Mammary epithelial cell (primary cell): ENCODE measurements at regions of chr17 and their contacts with region 1.

Region 1: GRCh38 chr17:71472809-71473789 is 647.7 kb upstream of the SOX9 start:
- DNase-seq: peak; percentile 63
- H3K4me3 ChIP-seq: no peak overlapping the region
- H3K27ac ChIP-seq: no peak overlapping the region
- H3K4me1 ChIP-seq: peaks cover 12% of the 10 kb centered on the region
- H3K27me3 ChIP-seq: no peaks in the 10 kb centered on the region
- CTCF ChIP-seq: peak; percentile 67 to 81

Region 2: DNA sequence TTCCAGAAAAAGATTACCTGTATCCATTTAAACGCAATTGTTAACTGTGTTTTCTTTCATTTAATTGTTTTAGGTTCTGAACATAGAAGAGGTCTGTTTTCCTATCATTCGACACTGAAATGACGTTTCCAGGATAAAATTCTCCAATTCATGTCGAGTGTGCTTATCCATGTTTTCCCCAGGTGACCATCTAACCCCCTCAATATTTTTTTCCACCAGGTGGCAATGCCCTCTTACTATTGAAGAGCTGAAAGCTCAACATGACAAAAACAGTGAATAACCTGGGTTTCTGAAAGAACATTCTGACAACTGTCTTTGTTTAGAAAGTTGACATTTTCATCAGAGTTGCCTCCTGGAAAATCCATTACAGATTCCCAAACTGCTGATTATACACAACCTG is 355.1 kb before region 1 on chr17:
- CTCF ChIA-PET with region 1: no interaction called
- dilution Hi-C with region 1: no loop called
- in situ Hi-C with region 1: no loop called
- intact Hi-C with region 1: loop called (anchors 2 kb)
- DNase-seq: peak; percentile 62
- H3K4me3 ChIP-seq: no peak overlapping the region
- H3K27ac ChIP-seq: peak overlapping the region; percentile 15
- H3K4me1 ChIP-seq: peaks cover 11% of the 10 kb centered on the region
- H3K27me3 ChIP-seq: no peaks in the 10 kb centered on the region
- CTCF ChIP-seq: peak; percentile 68 to 73

Region 3: DNA sequence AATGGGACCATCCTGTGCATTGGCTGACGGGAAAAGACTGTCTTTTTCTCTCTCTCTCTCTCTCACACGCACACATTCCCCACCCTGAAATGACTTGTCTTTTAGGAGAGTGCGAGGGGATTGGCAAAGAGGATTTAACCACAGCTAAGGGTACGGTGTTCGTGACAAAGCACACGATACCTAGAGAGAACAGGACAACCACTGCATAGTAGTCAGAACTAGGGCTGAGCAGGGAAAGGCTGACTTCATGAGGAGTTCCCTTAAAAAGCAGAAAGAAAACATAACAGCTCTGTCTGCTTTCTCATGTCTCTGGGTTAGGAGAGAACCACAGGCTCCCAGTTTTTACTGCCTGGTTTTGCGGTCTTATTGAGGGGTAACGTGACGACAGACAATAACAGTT is 95.1 kb before region 1 on chr17:
- CTCF ChIA-PET with region 1: no interaction called
- dilution Hi-C with region 1: no loop called
- in situ Hi-C with region 1: no loop called
- intact Hi-C with region 1: no loop called
- DNase-seq: no peak
- H3K4me3 ChIP-seq: no peak overlapping the region
- H3K27ac ChIP-seq: no peak overlapping the region
- H3K4me1 ChIP-seq: no peaks in the 10 kb centered on the region
- H3K27me3 ChIP-seq: no peaks in the 10 kb centered on the region
- CTCF ChIP-seq: no peak

Region 4: GRCh38 chr17:71412803-71413202 is 60.3 kb before region 1 on chr17:
- CTCF ChIA-PET with region 1: interaction called, 3 read pairs
- dilution Hi-C with region 1: no loop called
- in situ Hi-C with region 1: no loop called
- intact Hi-C with region 1: loop called (anchors 5 kb)
- DNase-seq: peak; percentile 98
- H3K4me3 ChIP-seq: no peak overlapping the region
- H3K27ac ChIP-seq: peak overlapping the region; percentile 97
- H3K4me1 ChIP-seq: peaks cover 42% of the 10 kb centered on the region
- H3K27me3 ChIP-seq: no peaks in the 10 kb centered on the region
- CTCF ChIP-seq: no peak

Region 5: GRCh38 chr17:71633391-71633849 is 160.3 kb after region 1 on chr17:
- CTCF ChIA-PET with region 1: no interaction called
- dilution Hi-C with region 1: no loop called
- in situ Hi-C with region 1: no loop called
- intact Hi-C with region 1: loop called (anchors 2 kb)
- DNase-seq: peak; percentile 99
- H3K4me3 ChIP-seq: peak overlapping the region in 1 of 3 experiments; percentile 14
- H3K27ac ChIP-seq: peak overlapping the region; percentile 75
- H3K4me1 ChIP-seq: peaks cover 43% of the 10 kb centered on the region
- H3K27me3 ChIP-seq: no peaks in the 10 kb centered on the region
- CTCF ChIP-seq: no peak

Region 6: DNA sequence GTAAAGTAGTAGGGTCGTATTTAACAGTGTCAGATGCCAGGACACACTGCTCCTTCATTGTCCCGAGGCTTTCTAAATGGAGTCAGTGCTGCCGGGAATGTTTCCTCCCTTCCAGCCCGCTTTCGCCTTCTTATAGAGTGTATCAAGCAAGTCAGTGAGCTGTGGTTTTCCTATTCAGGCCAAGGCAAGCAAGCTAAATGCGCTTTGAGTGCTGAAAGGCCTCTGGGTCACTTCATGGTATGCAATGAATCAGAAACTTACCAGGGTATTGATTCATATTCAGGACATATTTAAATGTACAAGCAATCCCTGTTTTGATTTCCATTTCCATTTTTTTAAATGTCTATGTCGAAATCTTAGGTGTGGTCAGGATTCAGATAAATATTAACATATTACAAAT is 319.9 kb after region 1 on chr17:
- CTCF ChIA-PET with region 1: no interaction called
- dilution Hi-C with region 1: no loop called
- in situ Hi-C with region 1: no loop called
- intact Hi-C with region 1: loop called (anchors 1 kb)
- DNase-seq: peak; percentile 96
- H3K4me3 ChIP-seq: no peak overlapping the region
- H3K27ac ChIP-seq: peak overlapping the region; percentile 46
- H3K4me1 ChIP-seq: peaks cover 26% of the 10 kb centered on the region
- H3K27me3 ChIP-seq: no peaks in the 10 kb centered on the region
- CTCF ChIP-seq: no peak